Right ventricle myocardium superior (tissue), 1 donor: ENCODE measurements at regions of chr3 and their contacts with region 1.

Region 1: DNA sequence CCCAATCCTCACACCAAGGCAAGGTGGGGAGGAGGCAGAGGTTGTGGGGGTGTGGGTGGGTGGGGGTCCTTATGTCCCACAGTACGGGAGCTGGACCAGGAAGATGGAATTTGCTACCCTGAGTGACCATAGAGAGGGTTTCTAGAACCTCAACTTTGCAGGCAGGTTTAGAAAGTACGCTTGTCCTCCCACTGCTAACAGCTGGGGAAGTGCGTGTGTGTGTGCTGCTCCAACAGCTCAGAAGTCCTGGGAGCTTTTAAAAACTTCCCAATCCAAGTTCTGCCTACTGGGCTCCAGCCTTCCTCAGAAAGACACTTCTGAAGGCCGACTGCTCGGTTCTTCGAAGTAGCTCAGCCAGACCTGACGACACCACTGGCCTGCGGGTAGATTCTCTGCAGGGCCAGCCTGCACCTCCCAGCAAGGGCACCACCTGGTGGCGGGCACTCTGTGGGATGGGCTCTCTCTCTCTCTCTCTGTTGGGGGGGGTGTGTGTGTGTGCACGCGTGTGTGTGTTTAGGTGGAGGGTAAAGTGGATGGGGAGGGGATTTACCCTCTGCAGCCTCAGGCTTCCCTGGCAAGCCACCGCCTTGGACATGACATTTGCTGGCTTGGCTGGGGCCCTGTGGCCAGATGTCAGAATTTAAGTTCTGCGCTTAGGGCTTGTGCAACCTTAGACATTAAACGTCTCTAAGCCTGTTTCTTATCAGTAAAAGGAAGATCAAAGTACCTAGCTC is 15.6 kb downstream of the TMEM158 start:
- DNase-seq: peak; percentile 89
- ATAC-seq: peak; percentile 98

Region 2: GRCh38 chr3:45043728-45044299 is 166.7 kb before region 1 on chr3:
- intact Hi-C with region 1: loop called (anchors 2 kb)
- DNase-seq: no peak
- ATAC-seq: no peak